K562 (cell line): ENCODE measurements at regions of chr17 and their contacts with region 1.

Region 1: DNA sequence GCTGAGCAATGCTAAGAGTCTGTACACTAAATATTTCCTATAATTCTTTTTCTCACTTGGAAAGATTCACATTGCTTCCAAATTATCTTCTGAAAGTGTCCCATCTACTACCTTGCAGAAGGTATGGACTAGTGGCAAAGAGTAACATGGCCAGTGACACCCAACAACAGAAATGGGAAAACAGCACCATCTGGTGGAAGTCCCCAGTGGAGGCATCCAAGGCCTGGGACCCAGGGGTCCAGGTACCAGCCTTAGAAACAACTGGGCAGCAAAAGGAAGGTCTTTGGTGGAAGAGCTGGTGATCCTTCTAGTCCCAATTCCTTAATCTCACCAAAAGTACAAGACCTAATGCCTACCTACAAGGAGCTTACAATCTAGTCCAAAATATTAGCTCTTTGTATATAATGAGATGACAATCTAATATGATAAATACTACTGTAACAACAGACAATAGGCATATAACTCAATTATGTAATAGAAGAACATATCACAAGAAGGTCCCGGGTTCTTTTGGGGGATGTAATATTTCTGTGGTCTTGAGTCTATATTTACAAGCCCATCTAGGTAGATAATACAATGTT is 55.3 kb downstream of the SKAP1 start:
- DNase-seq: peak; percentile 41 to 73 (median 65)
- ATAC-seq: peak; percentile 95
- H3K4me3 ChIP-seq: no peak overlapping the region
- H3K27ac ChIP-seq: no peak overlapping the region
- H3K4me1 ChIP-seq: peaks cover 0 to 12% of the 10 kb centered on the region in 2 experiments; a peak in 3 of 5 replicates
- H3K27me3 ChIP-seq: no peaks in the 10 kb centered on the region
- CTCF ChIP-seq: peak; percentile 83 to 89 (median 88)
- EP300 ChIP-seq: no peak
- POLR2A ChIP-seq: no peak
- RAD21 ChIP-seq: peak; percentile 62 to 90

Region 2: DNA sequence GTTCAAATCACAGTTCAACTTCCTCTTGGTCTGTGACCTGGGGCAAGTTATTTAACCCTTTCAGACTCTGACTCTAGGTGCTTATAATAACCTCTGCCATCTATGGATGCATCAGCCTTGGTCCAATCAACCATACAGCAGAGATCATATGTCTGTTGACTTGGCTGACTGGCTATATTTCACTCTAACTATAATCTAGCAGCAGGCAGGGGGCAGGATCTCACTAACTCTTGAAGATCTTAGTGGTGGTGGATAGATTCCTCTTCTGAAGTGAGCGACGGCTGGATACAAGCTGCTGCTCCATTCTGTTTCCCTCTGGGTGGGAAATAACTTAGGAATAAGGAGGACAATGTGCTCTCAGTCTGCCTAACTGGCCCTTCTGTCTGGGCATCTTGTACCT is 91.3 kb before region 1 on chr17:
- CTCF ChIA-PET with region 1: no interaction called
- POLR2A ChIA-PET with region 1: no interaction called
- in situ Hi-C with region 1: no loop called
- intact Hi-C with region 1: no loop called
- DNase-seq: no peak
- ATAC-seq: peak; percentile 59; the same call in 2 of the 3 replicates
- H3K4me3 ChIP-seq: no peak overlapping the region
- H3K27ac ChIP-seq: no peak overlapping the region
- H3K4me1 ChIP-seq: peaks cover 0 to 16% of the 10 kb centered on the region in 2 experiments; a peak in 2 of 5 replicates
- H3K27me3 ChIP-seq: no peaks in the 10 kb centered on the region
- CTCF ChIP-seq: peak in 2 of 3 experiments; percentile 16 to 17; a peak in 1 of 6 replicates
- EP300 ChIP-seq: no peak
- POLR2A ChIP-seq: no peak
- RAD21 ChIP-seq: peak in 1 of 2 experiments; percentile 30; a peak in 2 of 4 replicates

Region 3: GRCh38 chr17:48363161-48363560 is 11.6 kb before region 1 on chr17:
- CTCF ChIA-PET with region 1: interaction called, 3 read pairs
- POLR2A ChIA-PET with region 1: interaction called, 14 read pairs
- in situ Hi-C with region 1: no loop called
- intact Hi-C with region 1: no loop called
- DNase-seq: no peak
- ATAC-seq: no peak
- H3K4me3 ChIP-seq: no peak overlapping the region
- H3K27ac ChIP-seq: no peak overlapping the region
- H3K4me1 ChIP-seq: peaks cover 0 to 13% of the 10 kb centered on the region in 2 experiments; a peak in 3 of 5 replicates
- H3K27me3 ChIP-seq: no peaks in the 10 kb centered on the region
- CTCF ChIP-seq: no peak
- EP300 ChIP-seq: no peak
- POLR2A ChIP-seq: no peak
- RAD21 ChIP-seq: no peak

Region 4: GRCh38 chr17:48539177-48539576 is 164.4 kb after region 1 on chr17:
- CTCF ChIA-PET with region 1: no interaction called
- POLR2A ChIA-PET with region 1: no interaction called
- in situ Hi-C with region 1: no loop called
- intact Hi-C with region 1: no loop called
- DNase-seq: no peak
- ATAC-seq: no peak
- H3K4me3 ChIP-seq: no peak overlapping the region
- H3K27ac ChIP-seq: no peak overlapping the region
- H3K4me1 ChIP-seq: peaks cover 21 to 25% of the 10 kb centered on the region in 2 experiments
- H3K27me3 ChIP-seq: no peaks in the 10 kb centered on the region
- CTCF ChIP-seq: no peak
- EP300 ChIP-seq: no peak
- POLR2A ChIP-seq: no peak
- RAD21 ChIP-seq: no peak